ENCODE measurements at regions of chr12 and their contacts with region 1.

Region 1: GRCh38 chr12:113965951-113966797 is at the start of gene RBM19:
- DNase-seq: peak; percentile 98 to 99
- ATAC-seq: peak; percentile 100
- H3K4me3 ChIP-seq: peak within 1 kb of the TSS; percentile 69 to 92
- H3K27ac ChIP-seq: peak within 1 kb of the TSS in 1 of 2 donors; percentile 25
- H3K4me1 ChIP-seq: no peaks in the 10 kb centered on the region
- H3K27me3 ChIP-seq: no peaks in the 10 kb centered on the region
- total RNA-seq, gene RBM19: 30.3 to 31.8 TPM

Region 2: DNA sequence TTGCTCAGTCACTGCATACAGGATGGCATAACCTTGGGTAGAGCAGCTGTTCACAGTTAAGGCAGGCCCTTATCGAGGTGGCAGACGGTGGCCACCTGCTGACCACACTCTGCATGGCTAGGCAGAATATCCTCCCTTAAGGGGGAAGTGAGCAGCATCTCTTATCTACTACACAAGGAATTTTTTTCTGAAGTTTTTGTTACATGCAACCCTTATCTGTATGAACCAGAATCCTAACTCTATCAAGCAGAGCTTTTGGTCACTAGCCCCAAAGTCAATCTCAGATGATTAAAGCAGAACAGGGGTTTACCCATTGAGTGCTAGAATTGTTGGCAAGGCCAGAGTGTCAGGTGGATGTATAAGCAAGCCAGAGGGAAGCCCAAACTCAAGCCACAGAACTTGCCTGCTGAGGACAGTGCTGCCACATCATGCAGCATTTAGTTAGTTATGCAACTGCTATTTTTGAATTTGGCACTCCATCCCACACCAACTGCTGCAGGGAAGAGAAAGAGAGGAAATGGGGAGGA is 246.9 kb after region 1 on chr12:
- intact Hi-C with region 1: no loop called
- DNase-seq: no peak
- ATAC-seq: no peak
- H3K4me3 ChIP-seq: no peak overlapping the region
- H3K27ac ChIP-seq: no peak overlapping the region
- H3K4me1 ChIP-seq: no peaks in the 10 kb centered on the region
- H3K27me3 ChIP-seq: no peaks in the 10 kb centered on the region

Region 3: GRCh38 chr12:114316076-114316475 is 349.9 kb after region 1 on chr12:
- intact Hi-C with region 1: loop called in 1 of 2 experiments (anchors 2 kb)
- DNase-seq: peak in 1 of 2 donors; percentile 49
- ATAC-seq: no peak
- H3K4me3 ChIP-seq: no peak overlapping the region
- H3K27ac ChIP-seq: no peak overlapping the region
- H3K4me1 ChIP-seq: peaks cover 1 to 4% of the 10 kb centered on the region in 2 donors
- H3K27me3 ChIP-seq: no peaks in the 10 kb centered on the region